Activated CD4-positive, alpha-beta T cell treated with anti-CD3 and anti-CD28 coated beads, Interleukin-2, amount 10 ng/mL, durations not matched to agents 24 days and 14 days (primary cell): ENCODE measurements at regions of chr1 and their contacts with region 1.

Region 1: GRCh38 chr1:201513498-201514243 is 6.7 kb upstream of the CSRP1 start:
- DNase-seq: no peak
- H3K4me3 Mint-ChIP-seq: no peak overlapping the region
- H3K27ac Mint-ChIP-seq: no peak overlapping the region
- H3K4me1 Mint-ChIP-seq: peaks cover 17% of the 10 kb centered on the region
- H3K27me3 Mint-ChIP-seq: no peaks in the 10 kb centered on the region

Region 2: GRCh38 chr1:201447911-201448871 is 65.5 kb before region 1 on chr1:
- intact Hi-C with region 1: loop called (anchors 1 kb)
- DNase-seq: peak; percentile 85
- H3K4me3 Mint-ChIP-seq: no peak overlapping the region
- H3K27ac Mint-ChIP-seq: no peak overlapping the region
- H3K4me1 Mint-ChIP-seq: peaks cover 30% of the 10 kb centered on the region
- H3K27me3 Mint-ChIP-seq: peaks cover 22% of the 10 kb centered on the region

Region 3: GRCh38 chr1:201495471-201496295 is 18.0 kb before region 1 on chr1:
- intact Hi-C with region 1: no loop called
- DNase-seq: no peak
- H3K4me3 Mint-ChIP-seq: no peak overlapping the region
- H3K27ac Mint-ChIP-seq: no peak overlapping the region
- H3K4me1 Mint-ChIP-seq: peaks cover 1% of the 10 kb centered on the region
- H3K27me3 Mint-ChIP-seq: no peaks in the 10 kb centered on the region